ENCODE measurements at regions of chr21 and their contacts with region 1.

Region 1: DNA sequence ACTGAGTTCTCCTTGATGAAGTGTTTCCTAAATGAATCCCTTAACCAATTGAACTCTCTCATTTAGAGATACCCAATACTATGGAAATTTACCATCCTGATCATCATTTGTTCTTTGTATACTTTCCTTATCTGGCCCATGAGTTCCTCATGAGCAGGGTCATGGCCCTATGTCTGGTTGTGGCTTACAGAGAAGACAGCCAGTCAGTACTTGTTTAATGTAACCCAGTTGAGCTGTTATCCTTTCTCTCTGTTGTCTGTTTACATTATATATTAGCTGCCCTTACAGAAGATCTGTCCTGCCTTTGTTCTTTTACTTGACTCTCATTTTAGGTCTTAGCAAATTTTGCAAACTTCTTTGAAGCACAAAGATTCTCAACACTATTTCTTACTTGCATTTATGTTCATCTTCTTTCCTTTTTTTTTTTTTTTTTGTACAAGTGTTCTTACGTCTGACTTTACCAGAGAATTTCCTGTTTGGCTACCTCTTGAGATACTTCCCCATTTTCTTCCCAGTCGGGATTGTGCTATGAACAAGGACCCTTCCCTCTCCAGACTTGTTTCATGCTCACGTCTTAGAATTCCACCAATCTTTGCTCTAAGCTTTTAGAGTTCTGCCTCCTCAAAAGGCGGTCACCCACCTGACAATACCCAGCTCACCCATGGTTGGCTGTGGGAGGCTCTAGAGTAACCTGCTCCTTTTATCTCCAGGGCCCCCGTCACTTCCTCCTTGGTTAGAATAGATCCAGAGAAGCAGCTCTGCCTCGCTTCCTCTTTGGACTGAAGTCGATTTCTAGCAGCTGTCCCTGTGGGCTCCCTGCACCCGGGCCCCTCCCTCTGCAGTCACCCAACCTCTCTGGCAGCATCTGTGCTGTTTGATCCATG is 53.6 kb upstream of the RUNX1 start:
- DNase-seq: peak; percentile 48
- ATAC-seq: peak; percentile 38; the same call in 2 of the 3 replicates
- H3K4me3 ChIP-seq: no peak overlapping the region
- H3K27ac ChIP-seq: no peak overlapping the region
- H3K4me1 ChIP-seq: peaks cover 48% of the 10 kb centered on the region
- H3K27me3 ChIP-seq: no peaks in the 10 kb centered on the region; a peak in 1 of 5 replicates
- CTCF ChIP-seq: no peak
- EP300 ChIP-seq: peak in 1 of 2 experiments; percentile 47; a peak in 1 of 4 replicates
- POLR2A ChIP-seq: no peak
- RAD21 ChIP-seq: no peak

Region 2: DNA sequence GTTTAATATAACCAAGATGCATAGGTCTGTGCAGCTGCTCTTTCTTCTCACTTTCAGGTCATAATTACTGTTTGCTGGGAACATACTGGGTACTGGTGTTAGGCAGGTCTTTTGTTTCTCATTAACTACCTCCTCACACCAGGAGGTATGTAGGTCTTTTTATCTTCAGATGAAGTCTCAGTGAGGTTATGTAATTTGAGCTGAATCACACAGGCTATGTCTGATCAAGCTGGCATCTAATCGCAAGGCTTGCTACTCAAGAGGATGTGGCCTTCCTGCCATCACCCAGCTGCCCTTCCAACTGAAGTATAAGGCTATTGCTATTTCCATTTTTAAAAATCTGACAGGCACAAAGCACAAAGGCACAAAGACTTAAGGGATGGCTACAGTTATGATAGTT is 150.0 kb before region 1 on chr21:
- CTCF ChIA-PET with region 1: no interaction called
- POLR2A ChIA-PET with region 1: no interaction called
- in situ Hi-C with region 1: no loop called
- intact Hi-C with region 1: no loop called
- DNase-seq: no peak
- ATAC-seq: no peak
- H3K4me3 ChIP-seq: no peak overlapping the region
- H3K27ac ChIP-seq: no peak overlapping the region
- H3K4me1 ChIP-seq: peaks cover 11% of the 10 kb centered on the region; the same call in 1 of the 2 replicates
- H3K27me3 ChIP-seq: no peaks in the 10 kb centered on the region
- CTCF ChIP-seq: no peak
- EP300 ChIP-seq: no peak
- POLR2A ChIP-seq: no peak
- RAD21 ChIP-seq: no peak

Region 3: DNA sequence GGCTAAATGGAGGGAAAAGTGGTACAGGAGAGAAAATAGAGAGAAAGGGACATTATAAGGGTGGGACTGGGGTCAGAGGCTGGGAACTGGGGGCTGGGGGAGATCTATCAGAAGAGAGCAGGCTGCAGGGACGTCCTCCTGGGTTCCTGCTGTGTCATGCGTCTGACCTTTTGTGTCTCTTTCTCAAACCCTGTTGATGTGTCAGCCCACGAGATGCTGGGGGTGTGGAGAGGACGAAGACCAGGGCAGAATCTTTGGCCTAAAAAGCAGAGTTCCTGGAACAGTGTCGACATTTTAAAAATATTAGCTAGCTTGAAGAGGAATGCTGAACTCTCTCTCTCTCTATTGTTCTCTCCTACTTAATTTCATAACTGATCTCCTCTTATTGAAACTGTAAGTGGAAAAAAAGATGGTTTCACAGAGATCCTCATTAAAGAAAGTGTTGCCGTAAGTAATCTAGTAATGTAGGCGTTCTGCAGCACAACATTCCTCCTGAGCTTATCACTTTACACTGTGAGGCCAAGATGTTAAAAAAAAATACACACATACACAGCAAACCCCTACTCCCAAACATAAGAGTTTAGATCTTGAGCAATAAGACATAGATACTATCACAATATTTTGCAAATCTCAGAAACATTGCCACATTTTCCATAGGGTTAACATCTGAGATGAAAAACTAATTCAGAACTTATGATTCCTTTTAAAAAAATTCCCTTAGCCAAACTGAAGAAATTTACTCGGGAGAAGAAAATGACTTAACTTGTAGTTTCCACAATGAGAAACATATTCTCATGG is 106.2 kb before region 1 on chr21:
- CTCF ChIA-PET with region 1: no interaction called
- POLR2A ChIA-PET with region 1: no interaction called
- in situ Hi-C with region 1: no loop called
- intact Hi-C with region 1: no loop called
- DNase-seq: no peak
- ATAC-seq: no peak
- H3K4me3 ChIP-seq: no peak overlapping the region
- H3K27ac ChIP-seq: no peak overlapping the region
- H3K4me1 ChIP-seq: peaks cover 16% of the 10 kb centered on the region
- H3K27me3 ChIP-seq: no peaks in the 10 kb centered on the region
- CTCF ChIP-seq: no peak
- EP300 ChIP-seq: no peak
- POLR2A ChIP-seq: no peak
- RAD21 ChIP-seq: no peak

Region 4: GRCh38 chr21:35071347-35071746 is 31.4 kb before region 1 on chr21:
- CTCF ChIA-PET with region 1: no interaction called
- POLR2A ChIA-PET with region 1: no interaction called
- in situ Hi-C with region 1: no loop called
- intact Hi-C with region 1: loop called (anchors 1 kb)
- DNase-seq: no peak
- ATAC-seq: no peak
- H3K4me3 ChIP-seq: no peak overlapping the region
- H3K27ac ChIP-seq: no peak overlapping the region
- H3K4me1 ChIP-seq: no peaks in the 10 kb centered on the region
- H3K27me3 ChIP-seq: no peaks in the 10 kb centered on the region; a peak in 1 of 5 replicates
- CTCF ChIP-seq: no peak
- EP300 ChIP-seq: no peak
- POLR2A ChIP-seq: no peak
- RAD21 ChIP-seq: no peak

Region 5: DNA sequence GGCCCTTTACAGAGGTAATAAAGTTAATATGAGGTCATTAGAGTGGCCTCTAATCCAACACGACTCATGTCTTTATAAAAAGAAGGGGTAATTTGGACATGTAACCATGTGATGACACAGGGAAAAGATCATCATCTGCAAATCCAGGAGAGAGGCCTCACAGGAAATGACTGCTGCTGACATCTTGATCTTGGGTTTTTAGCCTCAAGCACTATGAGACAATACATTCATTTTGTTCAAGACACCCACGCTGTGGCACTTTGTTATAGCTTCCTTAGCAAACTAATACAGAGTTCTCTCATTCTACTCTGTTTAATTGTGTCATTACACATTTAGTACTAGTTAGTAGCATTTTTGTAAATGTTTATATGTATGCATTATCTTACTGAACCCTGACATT is 10.3 kb after region 1 on chr21:
- CTCF ChIA-PET with region 1: no interaction called
- POLR2A ChIA-PET with region 1: no interaction called
- in situ Hi-C with region 1: no loop called
- intact Hi-C with region 1: no loop called
- DNase-seq: no peak
- ATAC-seq: no peak
- H3K4me3 ChIP-seq: no peak overlapping the region
- H3K27ac ChIP-seq: no peak overlapping the region
- H3K4me1 ChIP-seq: no peaks in the 10 kb centered on the region
- H3K27me3 ChIP-seq: no peaks in the 10 kb centered on the region
- CTCF ChIP-seq: no peak
- EP300 ChIP-seq: no peak
- POLR2A ChIP-seq: no peak
- RAD21 ChIP-seq: no peak

Measured in HepG2 (cell line).